ENCODE measurements at regions of chr5 and their contacts with region 1.

Region 1: GRCh38 chr5:137320056-137321045 is 178.8 kb downstream of the SPOCK1 start:
- DNase-seq: peak; percentile 39 to 56
- H3K4me3 ChIP-seq: no peak overlapping the region
- H3K27ac ChIP-seq: no peak overlapping the region
- H3K4me1 ChIP-seq: 0 out of 2 replicates have a peak, but pooled peaks cover 9% of the 10 kb centered on the region
- H3K27me3 ChIP-seq: no peaks in the 10 kb centered on the region
- CTCF ChIP-seq: peak; percentile 92

Region 2: GRCh38 chr5:137040014-137040413 is 280.3 kb before region 1 on chr5:
- CTCF ChIA-PET with region 1: interaction called, 15 read pairs
- POLR2A ChIA-PET with region 1: no interaction called
- intact Hi-C with region 1: no loop called
- DNase-seq: no peak
- H3K4me3 ChIP-seq: no peak overlapping the region
- H3K27ac ChIP-seq: no peak overlapping the region
- H3K4me1 ChIP-seq: no peaks in the 10 kb centered on the region; the same call in 1 of the 2 replicates
- H3K27me3 ChIP-seq: no peaks in the 10 kb centered on the region
- CTCF ChIP-seq: no peak

Region 3: GRCh38 chr5:137075163-137075970 is 245.0 kb before region 1 on chr5:
- CTCF ChIA-PET with region 1: interaction called, 17 read pairs
- POLR2A ChIA-PET with region 1: no interaction called
- intact Hi-C with region 1: no loop called
- DNase-seq: peak; percentile 72 to 84
- H3K4me3 ChIP-seq: no peak overlapping the region
- H3K27ac ChIP-seq: no peak overlapping the region
- H3K4me1 ChIP-seq: peaks cover 44% of the 10 kb centered on the region
- H3K27me3 ChIP-seq: no peaks in the 10 kb centered on the region
- CTCF ChIP-seq: peak; percentile 85

Region 4: DNA sequence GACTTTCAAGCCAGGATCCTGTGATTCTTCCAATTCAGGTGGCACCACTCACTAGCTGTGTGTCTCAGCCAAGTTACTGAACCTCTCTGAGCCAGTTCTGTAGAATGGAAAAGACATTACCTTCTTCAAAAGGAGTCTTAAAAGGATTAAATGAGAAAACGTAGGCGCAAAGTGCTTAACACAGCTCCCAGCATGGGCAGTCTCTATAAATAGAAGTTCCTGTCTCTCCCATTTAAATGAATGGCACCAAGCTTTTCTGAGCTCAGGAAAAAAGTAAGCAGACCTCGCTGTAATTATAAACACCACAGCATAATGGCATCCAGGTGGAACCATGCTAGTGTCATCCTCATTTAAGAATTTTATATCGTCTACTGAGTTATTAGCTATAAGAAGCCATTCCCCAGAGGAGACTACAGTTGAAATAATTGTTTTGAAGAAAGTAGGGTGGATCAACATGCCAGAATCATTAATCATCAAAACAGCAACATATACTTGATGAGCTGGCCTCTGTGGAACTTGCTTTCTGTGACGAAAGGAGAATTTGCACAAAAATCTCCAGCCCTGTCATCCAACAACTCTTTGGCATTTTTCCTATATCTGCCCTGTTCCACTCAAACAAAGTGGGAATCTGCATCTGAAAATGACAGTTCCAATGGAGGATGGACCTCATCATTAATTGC is 10.2 kb before region 1 on chr5:
- CTCF ChIA-PET with region 1: interaction called, 16 read pairs
- POLR2A ChIA-PET with region 1: no interaction called
- intact Hi-C with region 1: no loop called
- DNase-seq: peak; percentile 29 to 92
- H3K4me3 ChIP-seq: no peak overlapping the region
- H3K27ac ChIP-seq: peak overlapping the region; percentile 68
- H3K4me1 ChIP-seq: peaks cover 26% of the 10 kb centered on the region
- H3K27me3 ChIP-seq: no peaks in the 10 kb centered on the region
- CTCF ChIP-seq: no peak

Region 5: GRCh38 chr5:137498736-137499505 is 178.6 kb after region 1 on chr5 and contains the start of gene SPOCK1:
- CTCF ChIA-PET with region 1: interaction called, 21 read pairs
- POLR2A ChIA-PET with region 1: no interaction called
- intact Hi-C with region 1: loop called (anchors 1 kb)
- DNase-seq: peak; percentile 46 to 81
- H3K4me3 ChIP-seq: peak within 1 kb of the TSS; percentile 48; the same call in 1 of the 2 replicates
- H3K27ac ChIP-seq: no peak within 1 kb of the TSS
- H3K4me1 ChIP-seq: no peaks in the 10 kb centered on the region
- H3K27me3 ChIP-seq: no peaks in the 10 kb centered on the region
- CTCF ChIP-seq: peak; percentile 47; the same call in 1 of the 2 replicates
- total RNA-seq, gene SPOCK1: 23.9 and 31.8 TPM in 2 replicates

Region 6: GRCh38 chr5:137735555-137736284 is 415.4 kb after region 1 on chr5 and contains the start of gene KLHL3:
- CTCF ChIA-PET with region 1: no interaction called
- POLR2A ChIA-PET with region 1: no interaction called
- intact Hi-C with region 1: loop called (anchors 10 kb)
- DNase-seq: peak; percentile 48 to 61
- H3K4me3 ChIP-seq: peak within 1 kb of the TSS; percentile 51; the same call in 1 of the 2 replicates
- H3K27ac ChIP-seq: peak within 1 kb of the TSS; percentile 81
- H3K4me1 ChIP-seq: peaks cover 52% of the 10 kb centered on the region
- H3K27me3 ChIP-seq: no peaks in the 10 kb centered on the region
- CTCF ChIP-seq: no peak; the same call in 1 of the 2 replicates
- total RNA-seq, gene KLHL3: 13.6 and 15.2 TPM in 2 replicates

Measured in PC-9 (cell line).